ENCODE measurements at regions of chr1 and their contacts with region 1.

Region 1: DNA sequence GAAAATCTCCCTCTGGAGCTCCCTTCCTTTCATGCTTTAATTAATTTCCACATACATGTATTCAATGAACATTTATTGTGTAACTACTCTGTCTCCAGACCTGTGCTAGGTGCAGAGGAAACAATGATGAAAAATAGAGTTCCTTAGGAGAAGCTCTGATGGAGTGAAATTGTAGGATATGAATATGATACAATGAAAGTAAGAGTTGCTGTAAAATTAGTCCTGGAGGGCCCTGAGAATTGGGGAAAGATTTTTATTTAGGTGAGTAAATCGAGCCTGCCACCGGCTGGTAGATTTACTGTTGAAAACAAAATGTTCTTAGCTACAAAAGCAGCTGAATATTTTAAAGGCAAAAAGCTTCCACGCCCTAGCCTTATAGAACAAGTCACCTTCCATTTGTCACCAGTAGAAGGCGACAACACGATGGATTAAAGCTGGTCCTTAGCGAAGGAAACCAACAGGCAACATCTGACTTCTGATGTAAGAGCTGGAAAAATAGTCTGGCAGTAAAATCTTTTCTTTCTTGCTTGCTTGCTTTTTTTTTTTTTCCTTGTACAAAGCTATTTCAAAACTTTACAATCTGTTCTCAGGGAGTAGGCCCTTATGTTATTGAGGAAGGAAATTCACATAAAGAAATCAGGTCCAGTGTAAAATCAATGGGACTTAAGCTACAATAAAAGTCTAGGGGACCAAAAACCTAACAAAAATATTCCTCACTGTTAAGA is 82.0 kb upstream of the ROR1 start:
- DNase-seq: peak; percentile 62 to 73
- H3K4me3 ChIP-seq: no peak overlapping the region
- H3K4me3 Mint-ChIP-seq: no peak overlapping the region
- H3K27ac Mint-ChIP-seq: no peak overlapping the region
- H3K4me1 ChIP-seq: peaks cover 5% of the 10 kb centered on the region; the same call in 1 of the 2 replicates
- H3K4me1 Mint-ChIP-seq: peaks cover 18% of the 10 kb centered on the region
- H3K27me3 ChIP-seq: no peaks in the 10 kb centered on the region
- H3K27me3 Mint-ChIP-seq: no peaks in the 10 kb centered on the region
- CTCF ChIP-seq: peak; percentile 54 to 66

Region 2: DNA sequence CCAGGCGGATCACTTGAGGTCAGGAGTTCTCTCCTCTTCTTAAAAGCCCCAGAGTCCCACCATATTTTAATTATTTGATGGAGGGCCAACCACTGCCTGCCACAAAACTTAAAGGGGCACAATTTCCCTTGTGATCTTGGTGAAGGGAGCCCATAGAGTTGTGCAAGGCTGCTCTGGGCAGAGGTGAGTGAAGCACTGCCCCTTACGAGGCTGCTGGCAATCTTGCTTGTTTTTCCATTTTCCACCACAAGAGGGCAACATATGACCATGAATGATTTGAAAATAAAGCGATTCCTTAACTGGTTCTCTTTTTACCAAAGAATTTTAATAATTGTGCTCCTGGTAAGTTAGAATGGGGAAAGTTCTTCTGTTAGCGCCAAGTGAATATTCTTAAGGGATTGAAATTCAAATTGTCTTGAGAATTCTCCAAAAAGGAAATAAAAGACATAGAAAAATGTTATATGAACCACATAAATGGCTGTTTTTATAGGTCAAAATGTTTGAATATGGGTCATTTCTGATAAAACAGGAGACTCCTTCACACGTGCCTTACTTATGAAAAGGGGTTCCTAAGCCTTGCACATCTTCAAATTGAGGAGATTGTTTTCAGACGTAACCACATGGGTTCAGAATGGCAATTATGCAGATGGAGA is 76.0 kb before region 1 on chr1:
- CTCF ChIA-PET with region 1: interaction called, 3 read pairs
- POLR2A ChIA-PET with region 1: no interaction called
- intact Hi-C with region 1: loop called (anchors 1 kb)
- DNase-seq: peak; percentile 40 to 74
- H3K4me3 ChIP-seq: no peak overlapping the region
- H3K4me3 Mint-ChIP-seq: no peak overlapping the region
- H3K27ac Mint-ChIP-seq: no peak overlapping the region
- H3K4me1 ChIP-seq: no peaks in the 10 kb centered on the region; the same call in 1 of the 2 replicates
- H3K4me1 Mint-ChIP-seq: peaks cover 11% of the 10 kb centered on the region
- H3K27me3 ChIP-seq: no peaks in the 10 kb centered on the region
- H3K27me3 Mint-ChIP-seq: no peaks in the 10 kb centered on the region
- CTCF ChIP-seq: peak; percentile 37 to 59

Region 3: DNA sequence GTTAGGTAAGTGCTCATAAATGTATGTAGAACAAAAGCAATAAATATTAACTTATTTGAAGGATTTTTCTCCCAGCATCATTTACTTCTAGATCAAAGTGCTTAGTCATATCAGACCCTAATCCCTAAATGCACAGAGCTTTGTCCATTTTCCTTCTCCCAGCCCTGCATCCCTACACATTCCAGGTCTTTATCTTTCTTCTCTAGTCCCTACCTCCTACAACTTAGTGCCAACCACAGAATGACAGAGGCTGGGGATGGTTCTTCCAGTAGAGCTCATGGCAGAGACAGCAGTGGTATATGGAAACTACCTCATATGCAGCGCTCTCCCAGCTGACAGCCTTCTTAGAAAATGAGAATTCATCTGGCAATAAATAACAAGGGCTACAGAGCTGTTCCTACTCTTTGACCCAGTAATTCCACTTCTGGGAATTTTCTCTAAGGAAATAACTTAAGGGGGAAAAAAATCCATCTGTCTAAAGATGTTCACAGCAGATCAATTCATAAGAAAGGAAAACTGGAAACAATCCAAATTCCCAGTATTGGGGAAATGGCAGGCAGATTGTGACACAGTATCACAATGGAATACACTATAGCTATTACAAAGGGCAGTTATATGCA is 19.0 kb after region 1 on chr1:
- CTCF ChIA-PET with region 1: interaction called, 12 read pairs
- POLR2A ChIA-PET with region 1: no interaction called
- intact Hi-C with region 1: no loop called
- DNase-seq: peak; percentile 48 to 63
- H3K4me3 ChIP-seq: no peak overlapping the region
- H3K4me3 Mint-ChIP-seq: peak overlapping the region; percentile 42
- H3K27ac Mint-ChIP-seq: peak overlapping the region; percentile 66
- H3K4me1 ChIP-seq: peaks cover 58% of the 10 kb centered on the region
- H3K4me1 Mint-ChIP-seq: peaks cover 45% of the 10 kb centered on the region
- H3K27me3 ChIP-seq: no peaks in the 10 kb centered on the region
- H3K27me3 Mint-ChIP-seq: no peaks in the 10 kb centered on the region
- CTCF ChIP-seq: no peak

Region 4: DNA sequence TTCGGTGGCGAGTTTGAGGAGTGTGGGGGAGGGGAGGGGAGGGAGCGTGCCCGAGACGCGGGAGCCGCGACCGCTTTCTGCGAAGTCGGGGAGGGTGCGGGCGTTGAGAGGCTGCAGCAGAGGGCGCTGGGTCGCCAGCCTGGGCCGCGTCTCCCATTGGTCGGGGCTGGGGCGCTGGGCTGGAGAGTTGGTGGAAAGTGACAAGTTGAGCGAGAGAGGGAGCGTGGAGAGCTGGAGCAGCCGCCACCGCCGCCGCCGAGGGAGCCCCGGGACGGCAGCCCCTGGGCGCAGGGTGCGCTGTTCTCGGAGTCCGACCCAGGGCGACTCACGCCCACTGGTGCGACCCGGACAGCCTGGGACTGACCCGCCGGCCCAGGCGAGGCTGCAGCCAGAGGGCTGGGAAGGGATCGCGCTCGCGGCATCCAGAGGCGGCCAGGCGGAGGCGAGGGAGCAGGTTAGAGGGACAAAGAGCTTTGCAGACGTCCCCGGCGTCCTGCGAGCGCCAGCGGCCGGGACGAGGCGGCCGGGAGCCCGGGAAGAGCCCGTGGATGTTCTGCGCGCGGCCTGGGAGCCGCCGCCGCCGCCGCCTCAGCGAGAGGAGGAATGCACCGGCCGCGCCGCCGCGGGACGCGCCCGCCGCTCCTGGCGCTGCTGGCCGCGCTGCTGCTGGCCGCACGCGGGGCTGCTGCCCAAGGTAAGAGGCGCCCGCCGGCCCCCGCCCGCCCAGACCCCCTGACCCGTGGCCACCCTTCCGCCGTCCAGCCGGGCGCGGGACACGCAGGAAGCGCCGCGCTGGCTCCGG is 82.2 kb after region 1 on chr1 and contains the start of gene ROR1:
- CTCF ChIA-PET with region 1: interaction called, 10 read pairs
- POLR2A ChIA-PET with region 1: no interaction called
- intact Hi-C with region 1: loop called (anchors 1 kb)
- DNase-seq: peak; percentile 87 to 90
- H3K4me3 ChIP-seq: peak within 1 kb of the TSS; percentile 84
- H3K4me3 Mint-ChIP-seq: peak within 1 kb of the TSS; percentile 97
- H3K27ac Mint-ChIP-seq: peak within 1 kb of the TSS; percentile 77
- H3K4me1 ChIP-seq: peaks cover 13% of the 10 kb centered on the region
- H3K4me1 Mint-ChIP-seq: peaks cover 12% of the 10 kb centered on the region
- H3K27me3 ChIP-seq: no peaks in the 10 kb centered on the region
- H3K27me3 Mint-ChIP-seq: no peaks in the 10 kb centered on the region
- CTCF ChIP-seq: peak; percentile 32 to 64
- total RNA-seq, gene ROR1: 37.2 TPM in 2 replicates

Region 5: DNA sequence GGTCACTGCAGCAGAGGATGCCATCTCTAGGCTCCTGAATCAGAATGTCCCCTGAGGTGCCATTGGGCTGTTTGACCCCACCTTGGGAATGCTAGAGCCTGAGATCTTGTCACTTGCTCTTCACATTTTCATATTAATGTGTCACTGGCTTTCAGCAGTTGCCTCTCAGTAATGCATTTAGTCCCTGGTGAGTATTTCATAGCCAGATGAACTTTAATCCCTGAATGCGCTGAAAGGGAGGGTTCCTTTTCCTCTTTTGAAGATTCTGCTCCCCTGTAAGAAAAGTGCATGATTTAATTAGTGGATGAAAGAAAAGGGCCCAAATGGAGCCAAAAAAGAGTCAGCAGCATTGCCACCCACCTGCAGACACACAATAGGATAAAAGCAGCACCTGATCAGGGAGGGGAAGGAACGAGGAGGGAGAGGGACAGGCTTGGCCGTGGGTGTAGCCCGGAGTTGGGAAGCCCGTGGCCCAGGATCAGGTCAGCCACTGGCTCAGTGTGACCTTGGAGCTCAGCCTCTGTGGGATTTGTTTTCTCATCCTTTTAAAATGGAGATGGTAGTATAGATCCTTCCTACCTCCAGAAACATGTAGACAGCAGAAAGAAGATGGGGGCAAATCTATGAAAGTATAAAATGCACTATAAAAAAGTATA is 113.1 kb after region 1 on chr1:
- CTCF ChIA-PET with region 1: no interaction called
- POLR2A ChIA-PET with region 1: no interaction called
- intact Hi-C with region 1: no loop called
- DNase-seq: no peak
- H3K4me3 ChIP-seq: no peak overlapping the region
- H3K4me3 Mint-ChIP-seq: no peak overlapping the region
- H3K27ac Mint-ChIP-seq: no peak overlapping the region
- H3K4me1 ChIP-seq: no peaks in the 10 kb centered on the region
- H3K4me1 Mint-ChIP-seq: no peaks in the 10 kb centered on the region
- H3K27me3 ChIP-seq: no peaks in the 10 kb centered on the region
- H3K27me3 Mint-ChIP-seq: no peaks in the 10 kb centered on the region
- CTCF ChIP-seq: no peak

Region 6: DNA sequence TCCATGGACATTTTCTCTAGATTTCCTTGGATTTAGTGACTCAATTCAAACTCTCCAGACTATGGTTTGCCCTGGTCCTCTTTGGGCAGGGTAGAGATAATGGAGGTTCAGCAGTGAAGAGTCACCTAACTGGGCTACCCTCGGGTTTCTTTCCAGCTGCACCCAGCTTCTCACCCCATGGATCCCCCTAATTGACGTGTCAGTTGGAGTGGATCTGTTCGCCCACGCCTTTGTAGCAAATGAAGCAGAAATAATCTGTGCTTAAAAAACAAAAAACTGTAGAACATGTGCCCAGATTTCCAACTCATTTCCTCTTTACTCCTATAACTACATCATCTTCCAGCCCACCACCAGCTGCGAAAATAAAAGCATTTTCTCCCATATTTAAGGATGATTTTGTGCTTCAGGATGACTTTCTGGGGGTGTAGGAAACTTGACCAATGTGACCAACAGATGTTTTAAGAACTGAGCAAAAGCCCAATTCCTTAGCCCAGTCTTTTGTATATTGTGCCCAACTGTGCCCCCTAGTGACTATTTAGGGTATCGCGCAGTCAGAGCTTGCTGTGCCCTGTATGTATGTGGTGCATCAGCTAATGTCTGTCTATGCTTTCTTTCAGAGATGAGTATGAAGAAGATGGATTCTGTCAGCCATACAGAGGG is 445.0 kb after region 1 on chr1:
- CTCF ChIA-PET with region 1: interaction called, 18 read pairs
- POLR2A ChIA-PET with region 1: no interaction called
- intact Hi-C with region 1: loop called (anchors 1 kb)
- DNase-seq: peak; percentile 65 to 72
- H3K4me3 ChIP-seq: no peak overlapping the region
- H3K4me3 Mint-ChIP-seq: no peak overlapping the region
- H3K27ac Mint-ChIP-seq: no peak overlapping the region
- H3K4me1 ChIP-seq: peaks cover 8% of the 10 kb centered on the region
- H3K4me1 Mint-ChIP-seq: peaks cover 6% of the 10 kb centered on the region
- H3K27me3 ChIP-seq: no peaks in the 10 kb centered on the region
- H3K27me3 Mint-ChIP-seq: no peaks in the 10 kb centered on the region
- CTCF ChIP-seq: peak; percentile 57 to 65

Measured in Caco-2 (cell line).